Stomach (tissue), 19 donors: ENCODE measurements at regions of chr6 and their contacts with region 1.

Region 1: GRCh38 chr6:37483917-37484785 is 15.5 kb downstream of the CCDC167 start:
- DNase-seq: peak; percentile 69 to 85
- H3K4me3 ChIP-seq: no peak overlapping the region
- H3K27ac ChIP-seq: no peak overlapping the region
- H3K4me1 ChIP-seq: peaks cover 0 to 14% (median 7%) of the 10 kb centered on the region in 4 donors
- H3K27me3 ChIP-seq: no peaks in the 10 kb centered on the region
- CTCF ChIP-seq: peak in 5 of 7 experiments; percentile 63 to 84 (median 66)
- EP300 ChIP-seq: no peak
- POLR2A ChIP-seq: no peak

Region 2: GRCh38 chr6:37406726-37407356 is 77.3 kb before region 1 on chr6:
- intact Hi-C with region 1: no loop called
- DNase-seq: no peak
- H3K4me3 ChIP-seq: no peak overlapping the region
- H3K27ac ChIP-seq: no peak overlapping the region
- H3K4me1 ChIP-seq: no peaks in the 10 kb centered on the region
- H3K27me3 ChIP-seq: no peaks in the 10 kb centered on the region
- CTCF ChIP-seq: no peak
- EP300 ChIP-seq: no peak
- POLR2A ChIP-seq: no peak

Region 3: DNA sequence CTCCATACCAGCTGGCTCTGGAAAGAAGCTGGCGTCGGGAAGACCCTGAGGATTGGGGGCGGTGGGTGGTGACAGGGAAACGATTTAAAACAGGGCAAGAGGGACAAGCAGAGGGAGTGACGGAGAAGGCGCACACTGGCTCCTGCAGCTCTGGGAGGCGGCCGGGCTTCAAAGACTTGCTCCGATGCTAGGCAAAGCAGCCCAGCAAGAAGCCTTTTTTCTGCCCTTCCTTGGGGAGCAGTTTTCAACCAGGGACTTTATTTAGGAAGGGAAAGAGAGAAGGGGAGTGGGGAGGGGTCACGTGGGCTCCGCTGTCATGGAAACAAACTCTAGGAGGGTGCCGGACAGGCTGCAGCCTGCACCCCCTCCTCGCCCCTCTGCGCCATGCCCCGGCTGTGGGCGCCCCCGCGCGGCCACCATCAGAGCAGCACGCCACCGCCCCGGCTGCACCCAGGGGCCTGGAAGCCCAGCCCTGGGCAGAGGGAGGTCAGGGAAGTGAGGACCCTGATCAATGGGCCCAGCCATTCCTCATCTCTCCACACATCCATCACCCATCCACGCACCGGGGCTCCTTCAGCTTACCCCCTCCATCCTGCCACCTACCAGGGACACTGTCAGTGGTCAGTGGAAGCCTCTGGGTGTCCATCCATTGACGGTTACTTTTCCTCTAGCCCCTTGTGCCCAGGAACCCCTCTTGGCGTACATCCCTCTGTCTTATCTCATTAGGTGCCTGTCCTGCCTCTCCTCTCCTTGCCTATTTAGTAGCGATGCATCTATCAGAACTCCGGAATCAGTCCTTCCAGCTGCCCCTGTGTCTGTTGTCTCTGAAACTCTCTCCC is 82.2 kb after region 1 on chr6:
- intact Hi-C with region 1: loop called (anchors 10 kb)
- DNase-seq: peak; percentile 63 to 82
- H3K4me3 ChIP-seq: peak overlapping the region; percentile 34 to 42 (median 36)
- H3K27ac ChIP-seq: no peak overlapping the region
- H3K4me1 ChIP-seq: peaks cover 10 to 12% (median 12%) of the 10 kb centered on the region in 4 donors
- H3K27me3 ChIP-seq: peaks cover 0 to 78% (median 24%) of the 10 kb centered on the region in 3 donors
- CTCF ChIP-seq: peak in 5 of 7 experiments; percentile 54 to 81 (median 75)
- EP300 ChIP-seq: no peak
- POLR2A ChIP-seq: no peak

Region 4: DNA sequence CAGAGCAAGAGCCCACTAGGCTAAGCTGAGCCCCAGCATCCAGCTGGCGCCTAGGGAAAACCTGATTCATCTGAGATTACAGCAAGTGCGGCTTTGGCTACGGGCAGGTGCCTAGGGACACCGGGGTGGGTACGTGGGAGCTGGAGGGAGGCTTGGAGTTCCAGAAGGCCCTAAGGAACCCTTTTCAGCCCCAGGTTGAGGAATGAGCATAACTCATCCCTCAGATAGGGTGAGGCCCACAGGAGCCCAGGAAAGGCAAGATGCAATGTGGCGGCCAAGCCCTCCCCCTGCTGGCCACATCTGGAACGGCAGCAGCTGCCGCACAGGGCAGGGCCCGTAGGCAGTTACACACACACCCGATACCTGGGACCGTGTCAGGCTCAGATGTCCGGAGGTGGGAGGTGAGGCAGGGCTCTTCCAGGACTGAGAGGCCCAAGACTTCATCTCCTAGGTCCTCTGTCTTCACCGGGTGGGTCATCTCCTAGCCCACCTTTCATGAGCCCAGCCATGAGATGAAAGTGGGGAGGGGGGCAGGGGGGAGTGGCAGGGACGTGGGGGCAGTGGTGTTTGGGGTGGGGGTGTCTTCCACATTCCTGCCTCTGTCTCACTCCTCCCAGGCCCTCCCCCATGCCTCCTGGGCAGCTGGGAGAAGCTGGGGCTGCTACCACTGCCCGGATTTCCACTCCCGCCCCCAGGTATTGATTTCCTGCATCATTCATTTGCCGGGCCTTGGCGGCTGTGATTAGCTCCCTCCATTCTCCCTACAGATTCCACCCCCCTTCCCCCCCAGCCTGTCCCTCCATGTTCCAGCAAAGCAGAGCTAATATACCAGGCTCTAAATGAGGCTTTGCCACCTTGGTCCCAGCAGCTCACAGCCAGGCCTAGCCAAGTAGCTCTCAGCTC is 208.0 kb after region 1 on chr6:
- intact Hi-C with region 1: loop called (anchors 10 kb)
- DNase-seq: peak; percentile 81 to 89
- H3K4me3 ChIP-seq: no peak overlapping the region
- H3K27ac ChIP-seq: no peak overlapping the region
- H3K4me1 ChIP-seq: peaks cover 16 to 37% (median 26%) of the 10 kb centered on the region in 4 donors
- H3K27me3 ChIP-seq: peaks cover 0 to 57% (median 34%) of the 10 kb centered on the region in 3 donors
- CTCF ChIP-seq: peak in 6 of 7 experiments; percentile 66 to 99 (median 96)
- EP300 ChIP-seq: no peak
- POLR2A ChIP-seq: no peak

Region 5: DNA sequence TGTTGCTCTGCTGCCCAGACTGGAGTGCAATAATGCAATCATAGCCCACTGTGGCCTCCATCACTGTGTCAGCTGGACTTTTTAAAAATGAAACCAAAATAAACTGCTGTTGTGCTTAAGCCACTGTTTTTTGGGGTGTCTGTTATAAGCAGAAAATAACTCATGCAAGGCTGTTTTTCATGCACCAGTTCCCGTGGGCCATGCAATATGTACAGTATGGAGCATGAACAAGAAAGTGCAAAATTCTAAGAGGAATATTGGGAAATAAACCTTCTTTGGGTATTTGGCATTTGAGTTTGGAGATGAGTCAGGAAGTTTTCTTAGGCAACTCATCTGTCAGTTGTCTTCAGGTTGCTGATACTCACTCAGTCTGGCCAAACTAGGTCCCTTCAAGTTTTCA is 320.4 kb after region 1 on chr6:
- intact Hi-C with region 1: no loop called
- DNase-seq: no peak
- H3K4me3 ChIP-seq: no peak overlapping the region
- H3K27ac ChIP-seq: no peak overlapping the region
- H3K4me1 ChIP-seq: peaks cover 0 to under 1% (median 0%) of the 10 kb centered on the region in 4 donors
- H3K27me3 ChIP-seq: no peaks in the 10 kb centered on the region
- CTCF ChIP-seq: no peak
- EP300 ChIP-seq: no peak
- POLR2A ChIP-seq: no peak